AG04449 (cell line): ENCODE measurements at regions of chr4 and their contacts with region 1.

Region 1: GRCh38 chr4:151117371-151117962 is 18.0 kb downstream of the RPS3A start:
- DNase-seq: peak; percentile 23
- H3K4me3 ChIP-seq: no peak overlapping the region
- CTCF ChIP-seq: peak; percentile 56

Region 2: GRCh38 chr4:151129801-151130200 is 12.3 kb after region 1 on chr4:
- CTCF ChIA-PET with region 1: interaction called, 16 read pairs
- POLR2A ChIA-PET with region 1: no interaction called
- DNase-seq: no peak
- H3K4me3 ChIP-seq: no peak overlapping the region
- CTCF ChIP-seq: no peak

Region 3: DNA sequence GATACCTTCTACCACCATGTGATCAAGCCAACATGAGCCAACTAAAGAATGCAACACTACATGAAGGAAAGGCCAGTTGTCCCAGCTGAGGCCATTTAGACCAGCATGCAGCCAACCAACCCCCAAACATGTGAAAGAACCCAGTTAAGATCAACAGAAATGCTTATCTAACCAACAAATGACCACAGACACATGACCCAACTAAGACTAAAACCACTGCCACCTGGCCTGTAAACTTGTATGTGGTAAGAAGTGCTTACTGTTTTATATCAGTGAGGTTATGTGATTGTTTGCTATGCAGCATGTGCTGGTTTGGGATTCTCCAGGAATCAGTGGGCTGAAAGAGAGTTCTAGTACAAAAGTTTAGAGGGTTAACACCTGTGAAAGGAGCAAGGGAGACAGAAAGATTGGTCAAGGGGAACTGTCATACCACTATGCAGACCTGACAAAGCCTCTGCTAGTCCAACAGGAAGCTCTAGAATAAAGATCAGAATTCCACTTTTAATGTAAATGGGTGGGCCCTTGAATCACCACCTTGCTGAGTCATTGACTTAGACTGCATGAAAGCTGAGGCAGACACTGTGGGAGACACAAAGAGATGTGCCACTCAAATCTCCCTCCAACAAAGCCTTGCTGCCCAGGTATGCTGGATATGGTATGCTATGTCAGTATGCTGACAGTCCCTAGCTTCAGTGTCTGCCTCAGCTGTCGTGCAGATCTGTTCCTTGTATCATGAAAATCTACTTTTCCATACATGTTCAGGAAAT is 214.0 kb after region 1 on chr4:
- CTCF ChIA-PET with region 1: interaction called, 13 read pairs
- POLR2A ChIA-PET with region 1: no interaction called
- DNase-seq: no peak
- H3K4me3 ChIP-seq: no peak overlapping the region
- CTCF ChIP-seq: no peak

Region 4: DNA sequence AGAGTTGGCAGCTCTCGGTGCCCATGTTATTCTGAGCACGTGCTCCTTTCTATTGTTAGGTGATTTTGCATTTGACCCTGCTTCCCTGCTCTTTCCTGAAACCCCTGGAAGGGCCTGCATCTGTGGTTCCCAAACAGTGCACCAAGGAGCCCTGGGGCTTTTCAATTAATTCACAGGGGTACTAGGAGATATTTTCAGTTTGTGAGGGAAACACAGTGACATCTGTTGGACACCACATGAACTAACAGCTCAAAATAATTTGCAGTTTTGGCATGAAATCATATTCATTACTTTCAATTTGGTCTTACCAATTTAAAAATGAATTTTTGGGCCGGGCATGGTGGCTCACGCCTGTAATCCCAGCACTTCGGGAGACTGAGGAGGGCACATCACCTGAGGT is 486.8 kb after region 1 on chr4:
- CTCF ChIA-PET with region 1: interaction called, 22 read pairs
- POLR2A ChIA-PET with region 1: no interaction called
- DNase-seq: no peak
- H3K4me3 ChIP-seq: no peak overlapping the region
- CTCF ChIP-seq: peak; percentile 33